CD8-positive, alpha-beta memory T cell (primary cell): ENCODE measurements at regions of chr6 and their contacts with region 1.

Region 1: DNA sequence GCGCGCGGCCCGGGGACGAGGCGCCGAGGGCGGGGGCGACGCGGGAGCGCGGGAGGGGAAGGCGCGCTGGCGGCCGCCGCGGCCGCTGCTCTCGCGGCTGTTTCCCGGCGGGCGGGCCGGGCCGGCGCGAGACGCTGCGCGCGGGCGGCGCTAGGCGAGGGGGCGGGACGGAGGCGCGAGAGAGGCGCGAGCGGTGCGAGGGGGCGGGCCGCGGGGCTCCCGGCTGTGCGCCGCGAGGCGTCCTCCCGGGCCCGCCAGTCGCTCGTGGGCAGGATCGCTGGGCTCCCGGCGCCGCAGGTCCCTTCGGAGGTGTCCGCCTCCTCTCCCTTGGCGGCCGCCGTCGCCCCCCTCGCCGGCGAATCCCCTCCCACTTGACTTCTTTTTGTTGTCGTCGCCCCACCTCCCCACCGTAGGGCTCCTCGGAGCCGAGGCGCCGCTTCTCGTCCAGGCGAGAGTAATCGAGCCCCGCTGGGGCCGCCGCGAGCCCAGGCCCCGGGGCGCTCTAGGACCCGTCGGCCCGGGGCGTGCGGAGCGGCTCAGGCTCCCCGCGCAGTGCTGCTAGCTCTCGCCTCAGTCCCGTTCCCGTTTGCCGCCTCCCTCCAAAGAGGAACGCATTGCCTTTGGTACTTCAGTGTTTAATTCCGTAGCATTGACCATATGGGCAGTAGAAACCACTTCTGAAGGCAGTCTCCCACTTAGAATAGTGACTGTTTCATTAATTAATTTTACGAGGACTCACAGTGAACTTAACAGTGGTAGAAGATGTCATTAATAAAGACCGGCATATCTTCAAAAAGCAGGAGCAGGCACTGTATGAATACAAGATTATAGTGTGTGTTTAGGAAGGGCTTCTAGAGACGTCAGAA is at the start of gene RANBP9:
- DNase-seq: peak; percentile 82 to 95 (median 90)
- H3K4me3 ChIP-seq: peak within 1 kb of the TSS; percentile 57
- H3K4me3 Mint-ChIP-seq: peak within 1 kb of the TSS; percentile 96 to 99 (median 98)
- H3K27ac ChIP-seq: peak within 1 kb of the TSS; percentile 75
- H3K27ac Mint-ChIP-seq: peak within 1 kb of the TSS; percentile 96 to 99 (median 98)
- H3K4me1 ChIP-seq: peaks cover 31% of the 10 kb centered on the region
- H3K4me1 Mint-ChIP-seq: peaks cover 41 to 58% (median 53%) of the 10 kb centered on the region in 3 donors
- H3K27me3 ChIP-seq: no peaks in the 10 kb centered on the region
- H3K27me3 Mint-ChIP-seq: no peaks in the 10 kb centered on the region
- total RNA-seq, gene RANBP9: 45.4 to 47.0 TPM

Region 2: GRCh38 chr6:13681305-13682061 is 30.5 kb before region 1 on chr6:
- CTCF ChIA-PET with region 1: interaction called, 9 read pairs
- POLR2A ChIA-PET with region 1: interaction called, 11 read pairs
- DNase-seq: peak in 2 of 5 donors; percentile 62 to 63
- H3K4me3 ChIP-seq: no peak overlapping the region
- H3K4me3 Mint-ChIP-seq: peak overlapping the region; percentile 13 to 84 (median 65)
- H3K27ac ChIP-seq: peak overlapping the region; percentile 28
- H3K27ac Mint-ChIP-seq: peak overlapping the region; percentile 69 to 94 (median 90)
- H3K4me1 ChIP-seq: peaks cover 45% of the 10 kb centered on the region
- H3K4me1 Mint-ChIP-seq: peaks cover 57 to 76% (median 74%) of the 10 kb centered on the region in 3 donors
- H3K27me3 ChIP-seq: no peaks in the 10 kb centered on the region
- H3K27me3 Mint-ChIP-seq: no peaks in the 10 kb centered on the region

Region 3: GRCh38 chr6:13696226-13696625 is 15.7 kb before region 1 on chr6:
- CTCF ChIA-PET with region 1: interaction called, 3 read pairs
- POLR2A ChIA-PET with region 1: interaction called, 10 read pairs
- DNase-seq: no peak
- H3K4me3 ChIP-seq: no peak overlapping the region
- H3K4me3 Mint-ChIP-seq: peak overlapping the region in 2 of 7 donors; percentile 4 to 58
- H3K27ac ChIP-seq: no peak overlapping the region
- H3K27ac Mint-ChIP-seq: peak overlapping the region in 7 of 8 donors; percentile 25 to 87 (median 76)
- H3K4me1 ChIP-seq: peaks cover 51% of the 10 kb centered on the region
- H3K4me1 Mint-ChIP-seq: peaks cover 61 to 91% (median 70%) of the 10 kb centered on the region in 3 donors
- H3K27me3 ChIP-seq: no peaks in the 10 kb centered on the region
- H3K27me3 Mint-ChIP-seq: no peaks in the 10 kb centered on the region